B cell (primary cell): ENCODE measurements at regions of chr12 and their contacts with region 1.

Region 1: GRCh38 chr12:64655144-64655543 is 44.8 kb downstream of the RASSF3 start:
- DNase-seq: no peak
- ATAC-seq: no peak
- H3K4me3 ChIP-seq: no peak overlapping the region
- H3K4me3 Mint-ChIP-seq: no peak overlapping the region
- H3K27ac ChIP-seq: peak overlapping the region in 1 of 2 donors; percentile 38
- H3K27ac Mint-ChIP-seq: peak overlapping the region; percentile 2
- H3K4me1 ChIP-seq: peaks cover 34 to 52% of the 10 kb centered on the region in 2 donors
- H3K4me1 Mint-ChIP-seq: peaks cover 77% of the 10 kb centered on the region
- H3K27me3 ChIP-seq: no peaks in the 10 kb centered on the region
- H3K27me3 Mint-ChIP-seq: no peaks in the 10 kb centered on the region
- CTCF ChIP-seq: no peak

Region 2: DNA sequence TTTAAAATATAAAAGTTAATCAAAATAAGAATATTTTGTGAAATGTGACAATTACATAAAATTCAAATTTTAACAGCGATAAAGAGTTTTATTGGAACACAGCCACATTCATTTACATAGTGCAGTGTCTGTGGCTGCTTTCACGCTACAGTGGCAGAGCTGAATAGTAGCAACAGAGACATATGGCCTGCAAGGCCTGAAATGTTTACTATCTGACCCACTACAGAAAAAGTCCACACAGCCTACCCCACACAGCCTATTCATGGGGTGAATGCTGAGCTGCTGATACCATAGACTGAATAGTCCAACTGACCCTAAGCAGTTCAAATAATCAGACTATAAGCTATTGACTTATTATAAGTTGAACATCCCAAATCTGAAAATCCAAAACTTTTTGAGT is 90.8 kb after region 1 on chr12:
- CTCF ChIA-PET with region 1: no interaction called
- POLR2A ChIA-PET with region 1: interaction called, 11 read pairs
- intact Hi-C with region 1: no loop called
- DNase-seq: no peak
- ATAC-seq: no peak
- H3K4me3 ChIP-seq: no peak overlapping the region
- H3K4me3 Mint-ChIP-seq: no peak overlapping the region
- H3K27ac ChIP-seq: no peak overlapping the region
- H3K27ac Mint-ChIP-seq: no peak overlapping the region
- H3K4me1 ChIP-seq: no peaks in the 10 kb centered on the region
- H3K4me1 Mint-ChIP-seq: no peaks in the 10 kb centered on the region
- H3K27me3 ChIP-seq: no peaks in the 10 kb centered on the region
- H3K27me3 Mint-ChIP-seq: no peaks in the 10 kb centered on the region
- CTCF ChIP-seq: no peak